CD4-positive, alpha-beta memory T cell (primary cell): ENCODE measurements at regions of chr20 and their contacts with region 1.

Region 1: DNA sequence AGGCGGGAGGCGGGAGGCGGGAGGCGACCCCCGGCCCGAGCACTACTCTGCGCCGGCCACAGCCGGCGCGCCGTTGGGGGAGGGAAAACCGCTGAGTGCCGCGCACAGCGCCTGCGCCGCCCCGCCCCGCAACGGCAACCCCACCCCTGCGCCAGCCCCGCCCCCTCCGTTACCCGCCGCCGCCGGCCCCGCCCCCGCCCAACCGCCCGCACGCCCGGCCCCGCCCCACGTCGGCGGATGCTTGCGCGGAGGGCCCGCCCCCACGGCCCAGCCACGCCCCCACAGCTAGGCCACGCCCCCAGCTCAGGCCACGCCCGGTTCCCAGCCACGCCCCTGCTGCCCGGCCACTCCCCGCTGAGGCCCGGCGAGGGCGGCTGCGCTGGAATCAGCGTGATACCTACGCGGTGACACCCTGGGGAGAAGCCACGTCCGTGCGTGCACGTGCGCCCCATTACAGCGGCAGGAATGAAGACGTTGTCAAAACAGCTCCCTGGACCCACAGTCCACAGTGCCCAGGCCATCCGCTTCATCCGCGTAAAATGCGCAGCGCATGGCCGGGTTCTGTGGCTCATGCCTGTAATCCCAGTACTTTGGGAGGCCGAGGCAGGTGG is at the start of gene TCFL5:
- DNase-seq: peak; percentile 89 to 98 (median 92)
- H3K4me3 ChIP-seq: no peak within 1 kb of the TSS
- H3K4me3 Mint-ChIP-seq: peak within 1 kb of the TSS; percentile 68 to 80 (median 74)
- H3K27ac ChIP-seq: no peak within 1 kb of the TSS
- H3K27ac Mint-ChIP-seq: peak within 1 kb of the TSS; percentile 76 to 93 (median 81)
- H3K4me1 ChIP-seq: peaks cover 12% of the 10 kb centered on the region
- H3K4me1 Mint-ChIP-seq: peaks cover 10 to 17% (median 15%) of the 10 kb centered on the region in 4 donors
- H3K27me3 ChIP-seq: no peaks in the 10 kb centered on the region
- H3K27me3 Mint-ChIP-seq: peaks cover 0 to 2% of the 10 kb centered on the region in 2 donors
- total RNA-seq, gene TCFL5: 9.9 to 10.3 TPM

Region 2: DNA sequence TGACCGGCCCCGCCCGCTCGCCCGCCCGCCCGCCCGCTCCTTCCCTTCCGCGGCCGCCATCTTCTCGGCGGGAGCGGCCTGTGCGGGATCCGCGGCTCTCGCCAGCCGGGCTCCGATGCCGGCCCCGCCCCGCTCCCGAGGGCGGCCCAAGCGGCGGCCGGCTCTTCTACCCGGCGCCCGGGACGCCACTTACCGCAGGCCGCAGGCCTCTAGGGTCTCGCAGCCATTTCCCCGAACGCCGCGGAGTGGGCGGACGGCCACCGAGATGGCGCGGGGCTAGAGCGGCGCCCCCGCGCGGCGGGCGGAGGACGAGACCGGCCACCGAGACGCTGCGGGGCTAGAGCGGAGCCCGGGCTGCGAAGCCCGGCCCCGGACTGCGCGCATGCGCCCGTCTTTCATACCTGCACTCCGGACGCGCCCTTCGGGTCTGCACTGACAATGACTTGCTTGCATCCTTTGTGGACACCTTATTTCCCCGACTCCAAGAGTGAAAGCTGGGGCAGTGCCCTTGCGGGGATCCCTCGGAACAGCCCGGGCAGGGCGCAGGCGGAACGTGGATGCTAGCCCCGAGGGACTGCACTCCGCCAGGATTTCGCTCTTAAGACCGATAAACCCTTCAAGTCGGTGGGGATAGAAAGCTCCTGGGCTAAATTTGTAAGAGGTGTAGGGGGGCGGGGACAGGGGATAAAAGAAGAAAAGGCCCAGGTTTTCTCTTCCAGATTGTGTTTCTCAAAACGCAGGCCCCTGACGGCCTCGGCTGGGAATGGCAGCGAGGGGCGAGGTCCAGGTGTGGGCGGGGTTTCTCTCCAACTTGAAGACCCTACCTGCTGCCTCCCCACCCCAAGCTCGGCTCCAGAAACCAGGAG is 64.6 kb after region 1 on chr20 and contains the start of gene DIDO1:
- CTCF ChIA-PET with region 1: no interaction called
- POLR2A ChIA-PET with region 1: no interaction called
- intact Hi-C with region 1: loop called (anchors 5 kb)
- DNase-seq: peak; percentile 88 to 91 (median 90)
- H3K4me3 ChIP-seq: peak within 1 kb of the TSS; percentile 87 to 88
- H3K4me3 Mint-ChIP-seq: peak within 1 kb of the TSS; percentile 91 to 97 (median 96)
- H3K27ac ChIP-seq: peak within 1 kb of the TSS; percentile 91
- H3K27ac Mint-ChIP-seq: peak within 1 kb of the TSS; percentile 89 to 97 (median 94)
- H3K4me1 ChIP-seq: peaks cover 78% of the 10 kb centered on the region
- H3K4me1 Mint-ChIP-seq: peaks cover 37 to 89% (median 63%) of the 10 kb centered on the region in 4 donors
- H3K27me3 ChIP-seq: no peaks in the 10 kb centered on the region
- H3K27me3 Mint-ChIP-seq: no peaks in the 10 kb centered on the region
- total RNA-seq, gene DIDO1: 127 to 129 TPM